GM12878 (cell line): ENCODE measurements at regions of chr7 and their contacts with region 1.

Region 1: DNA sequence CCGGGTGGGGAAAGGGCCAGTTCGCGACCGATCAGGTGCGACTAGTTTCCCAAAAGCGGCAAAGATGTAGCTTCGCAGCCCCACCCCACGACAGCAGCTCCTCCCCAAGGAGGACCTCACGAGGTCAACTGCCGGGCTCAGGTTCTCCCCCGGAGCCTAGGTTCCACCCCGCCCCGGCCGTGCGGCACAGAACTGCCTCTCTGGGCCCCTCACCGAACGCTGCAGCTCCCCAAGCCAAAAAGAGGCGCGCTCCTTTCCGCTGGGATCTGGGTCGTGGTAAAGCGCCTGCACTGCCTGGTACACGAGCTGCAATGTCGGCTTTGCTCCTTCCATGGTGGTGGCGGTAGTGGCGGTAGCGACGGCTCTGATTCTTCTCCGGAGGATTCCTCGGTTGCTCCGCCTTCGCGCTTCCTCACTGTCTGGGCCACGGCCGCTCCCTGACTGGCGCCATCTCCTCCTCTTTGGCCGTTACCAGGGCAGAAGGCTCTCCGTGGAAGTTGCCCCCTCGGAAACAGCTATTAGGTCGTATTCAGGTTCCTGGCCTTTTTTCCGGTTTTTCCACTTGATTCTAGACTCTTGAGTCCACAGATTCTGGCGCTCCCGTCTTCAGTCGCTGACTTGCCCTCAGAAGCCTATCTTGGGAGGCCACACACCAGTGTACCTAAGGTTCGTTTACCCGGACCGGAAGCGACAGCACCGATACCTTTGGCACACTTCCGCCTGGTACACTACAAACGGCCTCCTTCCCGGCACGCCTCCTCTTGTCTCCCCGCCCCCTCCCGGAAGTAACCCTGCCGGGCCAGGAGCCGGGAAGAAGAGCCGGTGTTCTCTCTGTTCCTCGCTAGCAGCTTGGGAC is at the start of gene TNPO3:
- DNase-seq: peak; percentile 78
- ATAC-seq: peak; percentile 88
- H3K4me3 ChIP-seq: peak within 1 kb of the TSS; percentile 97
- H3K27ac ChIP-seq: peak within 1 kb of the TSS; percentile 93
- H3K4me1 ChIP-seq: peaks cover 5% of the 10 kb centered on the region
- H3K27me3 ChIP-seq: no peaks in the 10 kb centered on the region
- CTCF ChIP-seq: no peak
- EP300 ChIP-seq: no peak
- POLR2A ChIP-seq: peak; percentile 97
- RAD21 ChIP-seq: 0 out of 2 replicates have a peak, but pooled peaks have one; percentile 7
- polyA plus RNA-seq, gene TNPO3: 17.6 to 23.5 TPM

Region 2: GRCh38 chr7:128933180-128933891 is 121.3 kb before region 1 on chr7:
- CTCF ChIA-PET with region 1: no interaction called
- POLR2A ChIA-PET with region 1: interaction called, 4 read pairs
- RAD21 ChIA-PET with region 1: interaction called, 3 read pairs
- SMC1A ChIA-PET with region 1: interaction called, 4 read pairs
- in situ Hi-C with region 1: no loop called
- intact Hi-C with region 1: loop called (anchors 2 kb)
- DNase-seq: peak; percentile 71
- ATAC-seq: peak; percentile 59
- H3K4me3 ChIP-seq: peak overlapping the region; percentile 50
- H3K27ac ChIP-seq: peak overlapping the region; percentile 96
- H3K4me1 ChIP-seq: peaks cover 44% of the 10 kb centered on the region
- H3K27me3 ChIP-seq: no peaks in the 10 kb centered on the region
- CTCF ChIP-seq: no peak
- EP300 ChIP-seq: no peak; a peak in 1 of 4 replicates
- POLR2A ChIP-seq: peak; percentile 73
- RAD21 ChIP-seq: no peak

Region 3: GRCh38 chr7:129017933-129018538 is 36.6 kb before region 1 on chr7:
- CTCF ChIA-PET with region 1: interaction called, 3 read pairs
- POLR2A ChIA-PET with region 1: interaction called, 4 read pairs
- RAD21 ChIA-PET with region 1: interaction called, 10 read pairs
- SMC1A ChIA-PET with region 1: interaction called, 5 read pairs
- in situ Hi-C with region 1: no loop called
- intact Hi-C with region 1: no loop called
- DNase-seq: peak; percentile 64
- ATAC-seq: peak; percentile 94
- H3K4me3 ChIP-seq: no peak overlapping the region; the same call in 1 of the 2 replicates
- H3K27ac ChIP-seq: peak overlapping the region; percentile 93
- H3K4me1 ChIP-seq: peaks cover 42% of the 10 kb centered on the region
- H3K27me3 ChIP-seq: no peaks in the 10 kb centered on the region
- CTCF ChIP-seq: no peak
- EP300 ChIP-seq: no peak
- POLR2A ChIP-seq: no peak
- RAD21 ChIP-seq: no peak

Region 4: DNA sequence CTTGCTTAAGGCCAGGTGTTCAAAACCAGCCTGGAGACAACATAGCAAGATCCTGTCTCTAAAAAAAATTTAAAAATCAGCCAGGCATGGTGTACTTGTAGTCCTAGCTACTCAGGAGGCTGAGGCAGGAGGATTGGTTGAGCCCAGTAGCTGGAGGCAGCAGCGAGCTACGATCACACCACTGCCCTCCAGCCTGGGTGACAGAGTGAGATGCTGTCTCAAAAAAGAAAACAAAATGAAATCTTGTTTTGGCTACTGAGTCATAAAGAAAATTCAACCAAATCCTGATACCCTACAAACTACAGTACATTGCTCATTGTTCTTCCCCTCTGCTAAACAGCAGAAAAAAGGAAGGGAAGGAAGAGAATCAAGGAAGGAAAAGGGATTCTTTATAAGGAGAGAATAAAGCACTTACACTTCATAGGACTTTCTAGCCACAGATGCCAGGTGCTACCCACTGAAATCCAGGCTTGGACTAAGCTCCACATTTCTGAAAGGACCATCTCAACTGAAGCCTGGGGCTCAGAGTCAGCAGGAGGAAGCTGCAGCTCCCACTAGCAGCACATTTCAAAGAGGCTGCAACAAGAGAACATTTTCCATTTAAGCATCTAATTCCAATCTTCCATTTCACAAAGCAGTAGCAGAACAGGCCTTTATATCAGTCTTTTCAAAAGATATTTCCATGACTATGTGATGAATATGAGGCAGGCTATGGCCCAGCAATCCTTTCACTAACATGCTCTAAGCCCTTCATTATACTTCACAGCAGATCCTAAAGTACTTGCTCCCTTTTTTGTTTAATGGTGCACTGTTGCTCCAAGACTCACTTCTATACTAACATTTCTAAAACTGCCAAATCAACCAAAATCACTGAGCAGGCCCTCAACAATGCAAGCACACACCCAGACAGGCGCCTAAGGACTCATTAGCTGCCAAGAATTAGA is 13.3 kb before region 1 on chr7:
- CTCF ChIA-PET with region 1: interaction called, 12 read pairs
- POLR2A ChIA-PET with region 1: interaction called, 42 read pairs
- RAD21 ChIA-PET with region 1: interaction called, 24 read pairs
- SMC1A ChIA-PET with region 1: interaction called, 49 read pairs
- in situ Hi-C with region 1: no loop called
- intact Hi-C with region 1: no loop called
- DNase-seq: no peak
- ATAC-seq: peak; percentile 44
- H3K4me3 ChIP-seq: no peak overlapping the region
- H3K27ac ChIP-seq: peak overlapping the region; percentile 10; the same call in 1 of the 2 replicates
- H3K4me1 ChIP-seq: peaks cover 38% of the 10 kb centered on the region
- H3K27me3 ChIP-seq: no peaks in the 10 kb centered on the region
- CTCF ChIP-seq: no peak
- EP300 ChIP-seq: no peak
- POLR2A ChIP-seq: no peak
- RAD21 ChIP-seq: no peak

Region 5: GRCh38 chr7:129066290-129067131 is 11.8 kb after region 1 on chr7:
- CTCF ChIA-PET with region 1: interaction called, 14 read pairs
- POLR2A ChIA-PET with region 1: interaction called, 30 read pairs
- RAD21 ChIA-PET with region 1: interaction called, 32 read pairs
- SMC1A ChIA-PET with region 1: interaction called, 77 read pairs
- in situ Hi-C with region 1: no loop called
- intact Hi-C with region 1: no loop called
- DNase-seq: no peak
- ATAC-seq: peak; percentile 35
- H3K4me3 ChIP-seq: no peak overlapping the region
- H3K27ac ChIP-seq: no peak overlapping the region
- H3K4me1 ChIP-seq: no peaks in the 10 kb centered on the region
- H3K27me3 ChIP-seq: no peaks in the 10 kb centered on the region
- CTCF ChIP-seq: no peak
- EP300 ChIP-seq: no peak
- POLR2A ChIP-seq: no peak
- RAD21 ChIP-seq: no peak

Region 6: GRCh38 chr7:130047821-130048220 is 993.2 kb after region 1 on chr7:
- CTCF ChIA-PET with region 1: no interaction called
- POLR2A ChIA-PET with region 1: interaction called, 10 read pairs
- RAD21 ChIA-PET with region 1: no interaction called
- SMC1A ChIA-PET with region 1: no interaction called
- in situ Hi-C with region 1: no loop called
- intact Hi-C with region 1: no loop called
- DNase-seq: no peak
- ATAC-seq: no peak
- H3K4me3 ChIP-seq: no peak overlapping the region
- H3K27ac ChIP-seq: no peak overlapping the region
- H3K4me1 ChIP-seq: no peaks in the 10 kb centered on the region
- H3K27me3 ChIP-seq: no peaks in the 10 kb centered on the region
- CTCF ChIP-seq: no peak
- EP300 ChIP-seq: no peak
- POLR2A ChIP-seq: no peak
- RAD21 ChIP-seq: no peak